PC-9 (cell line): ENCODE measurements at regions of chr5 and their contacts with region 1.

Region 1: DNA sequence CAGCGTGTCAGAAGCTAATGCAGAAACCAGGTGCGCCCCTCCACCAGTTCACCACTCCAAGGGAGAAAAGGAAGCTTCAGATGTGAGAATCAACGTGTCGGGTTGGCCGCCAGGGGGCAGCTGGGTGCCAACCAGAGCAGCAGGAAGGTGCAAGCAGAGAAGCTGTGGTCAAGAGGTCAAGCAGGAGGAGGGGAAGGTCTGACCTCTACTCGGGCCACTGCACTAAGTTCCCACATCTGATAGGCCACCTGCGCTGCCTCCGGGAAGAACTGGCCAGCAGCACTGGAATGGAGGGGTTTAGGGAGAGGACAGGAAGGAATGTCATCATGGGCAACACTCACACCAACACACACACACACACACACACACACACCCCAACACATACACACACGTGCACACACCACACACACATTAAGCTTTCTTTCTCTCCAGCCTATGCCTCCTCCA is 31.4 kb downstream of the ANXA6 start:
- DNase-seq: peak; percentile 46 to 64
- H3K4me3 ChIP-seq: no peak overlapping the region
- H3K27ac ChIP-seq: no peak overlapping the region
- H3K4me1 ChIP-seq: peaks cover 7% of the 10 kb centered on the region
- H3K27me3 ChIP-seq: no peaks in the 10 kb centered on the region
- CTCF ChIP-seq: peak; percentile 89

Region 2: GRCh38 chr5:151093476-151093889 is 32.7 kb before region 1 on chr5:
- CTCF ChIA-PET with region 1: interaction called, 11 read pairs
- POLR2A ChIA-PET with region 1: no interaction called
- intact Hi-C with region 1: no loop called
- DNase-seq: peak; percentile 46 to 98
- H3K4me3 ChIP-seq: peak overlapping the region; percentile 35; the same call in 1 of the 2 replicates
- H3K27ac ChIP-seq: peak overlapping the region; percentile 94
- H3K4me1 ChIP-seq: peaks cover 50% of the 10 kb centered on the region
- H3K27me3 ChIP-seq: no peaks in the 10 kb centered on the region
- CTCF ChIP-seq: no peak

Region 3: GRCh38 chr5:151157426-151158286 is 31.4 kb after region 1 on chr5 and contains the start of gene ANXA6:
- CTCF ChIA-PET with region 1: no interaction called
- POLR2A ChIA-PET with region 1: no interaction called
- intact Hi-C with region 1: loop called (anchors 2 kb)
- DNase-seq: peak; percentile 43 to 76
- H3K4me3 ChIP-seq: peak within 1 kb of the TSS; percentile 53
- H3K27ac ChIP-seq: no peak within 1 kb of the TSS
- H3K4me1 ChIP-seq: no peaks in the 10 kb centered on the region
- H3K27me3 ChIP-seq: peaks cover 6% of the 10 kb centered on the region; the same call in 1 of the 2 replicates
- CTCF ChIP-seq: no peak
- total RNA-seq, gene ANXA6: 18.0 and 22.4 TPM in 2 replicates

Region 4: DNA sequence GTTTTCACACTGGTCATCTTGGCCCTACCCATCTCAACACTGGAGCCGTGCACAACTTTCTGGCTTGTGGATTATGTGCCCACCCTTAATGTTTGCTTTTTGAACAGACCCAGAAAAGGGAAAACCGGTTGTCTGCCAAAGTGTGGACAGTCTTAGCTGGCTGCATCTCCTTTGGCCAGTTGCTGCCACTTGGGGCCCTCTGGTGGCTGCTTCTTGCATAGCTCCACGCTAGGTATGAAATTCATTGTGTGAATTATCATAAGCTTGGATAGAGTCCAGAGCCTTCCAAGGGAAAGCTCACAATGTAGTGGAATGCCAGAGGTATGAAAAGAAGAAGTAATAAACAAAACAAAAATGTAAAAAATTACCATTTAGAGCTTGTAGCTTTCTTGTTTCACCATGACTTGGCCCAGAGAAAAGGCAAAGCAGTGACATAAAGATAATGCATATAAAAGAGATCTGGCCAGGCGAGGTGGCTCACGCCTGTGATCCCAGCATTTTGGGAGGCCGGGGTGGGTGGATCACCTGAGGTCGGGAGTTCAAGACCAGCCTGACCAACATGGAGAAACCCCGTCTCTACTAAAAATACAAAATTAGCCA is 189.9 kb after region 1 on chr5:
- CTCF ChIA-PET with region 1: interaction called, 10 read pairs
- POLR2A ChIA-PET with region 1: no interaction called
- intact Hi-C with region 1: loop called (anchors 1 kb)
- DNase-seq: peak; percentile 55 to 78
- H3K4me3 ChIP-seq: no peak overlapping the region
- H3K27ac ChIP-seq: no peak overlapping the region
- H3K4me1 ChIP-seq: no peaks in the 10 kb centered on the region
- H3K27me3 ChIP-seq: peaks cover 7% of the 10 kb centered on the region; the same call in 1 of the 2 replicates
- CTCF ChIP-seq: peak; percentile 91